Esophagus squamous epithelium (tissue), 5 donors: ENCODE measurements at regions of chr10 and their contacts with region 1.

Region 1: DNA sequence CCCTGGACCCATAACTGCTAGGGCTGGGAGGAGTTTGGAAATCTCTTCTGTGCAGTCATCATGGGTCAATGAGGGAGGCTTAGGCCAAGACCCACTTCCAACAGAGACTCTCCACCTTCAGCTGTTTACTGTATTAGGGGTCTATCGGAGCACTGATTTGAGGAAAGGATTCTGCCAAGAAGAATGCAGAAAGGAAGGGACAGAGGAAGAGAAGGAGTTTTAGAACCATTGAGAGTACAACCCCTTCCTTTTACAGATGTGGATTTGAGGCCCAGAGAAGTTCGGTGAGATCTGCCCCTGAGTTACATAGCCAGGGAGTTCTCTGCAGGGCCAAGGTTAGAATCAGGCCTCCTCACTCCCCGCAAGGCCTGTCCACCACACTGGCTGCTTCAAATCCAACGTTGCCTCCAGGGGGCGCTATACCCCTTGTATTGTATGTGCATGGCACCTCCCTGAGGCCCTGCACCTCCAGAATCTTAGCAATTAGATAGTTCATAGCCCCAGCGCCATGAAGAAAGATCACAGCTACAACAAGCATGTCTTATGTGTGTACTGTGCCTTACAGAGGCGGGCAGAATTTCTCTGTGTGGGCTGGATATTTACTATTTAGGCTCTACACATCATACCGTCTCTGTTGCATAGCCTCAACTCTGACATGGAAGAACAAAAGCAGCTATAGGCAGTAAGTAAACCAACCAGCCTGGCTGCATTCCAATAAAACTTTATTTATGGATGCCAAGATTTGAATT is 246.8 kb downstream of the SKIDA1 start:
- DNase-seq: peak; percentile 53
- H3K4me3 ChIP-seq: no peak overlapping the region
- H3K27ac ChIP-seq: no peak overlapping the region
- H3K4me1 ChIP-seq: peaks cover 0 to 7% (median 0%) of the 10 kb centered on the region in 3 donors
- H3K27me3 ChIP-seq: no peaks in the 10 kb centered on the region
- CTCF ChIP-seq: peak; percentile 49 to 86 (median 74)
- POLR2A ChIP-seq: no peak

Region 2: DNA sequence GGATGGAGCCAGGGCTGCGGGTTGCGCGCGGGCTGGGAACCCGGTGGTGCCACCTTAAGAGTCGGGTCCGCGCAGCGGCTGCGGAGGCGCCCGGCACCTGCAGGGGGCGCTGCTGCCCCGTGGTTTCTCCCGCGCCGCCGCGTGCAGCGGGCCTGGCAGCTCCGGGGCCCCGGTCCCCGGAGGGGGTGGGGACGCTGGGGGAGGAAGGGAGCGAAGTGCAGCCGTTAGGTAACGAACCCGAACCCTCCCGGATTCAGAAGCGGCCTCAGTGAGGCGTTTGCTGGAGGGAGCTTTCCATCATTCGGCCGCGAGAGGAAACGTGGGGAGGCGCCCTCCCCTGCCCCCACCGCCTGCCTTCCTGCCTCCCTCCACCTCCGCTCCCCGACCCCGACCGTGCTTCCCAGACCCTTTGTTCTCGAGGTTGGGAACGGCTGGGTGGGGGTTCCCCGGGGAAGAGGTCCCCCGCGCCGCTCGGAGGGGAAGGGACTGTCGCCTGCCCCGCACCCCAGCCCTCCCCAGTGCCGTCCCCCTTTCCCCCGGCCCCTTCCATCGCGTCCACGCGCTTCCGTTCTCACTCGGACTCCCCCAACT is 217.2 kb after region 1 on chr10:
- intact Hi-C with region 1: loop called (anchors 10 kb)
- DNase-seq: peak; percentile 34
- H3K4me3 ChIP-seq: peak overlapping the region; percentile 54 to 80 (median 76)
- H3K27ac ChIP-seq: peak overlapping the region; percentile 63 to 81 (median 77)
- H3K4me1 ChIP-seq: peaks cover 8 to 39% (median 8%) of the 10 kb centered on the region in 3 donors
- H3K27me3 ChIP-seq: peaks cover 0 to 38% (median 0%) of the 10 kb centered on the region in 4 donors
- CTCF ChIP-seq: peak; percentile 96 to 99 (median 98)
- POLR2A ChIP-seq: no peak